Mammary epithelial cell (primary cell): ENCODE measurements at regions of chr5 and their contacts with region 1.

Region 1: DNA sequence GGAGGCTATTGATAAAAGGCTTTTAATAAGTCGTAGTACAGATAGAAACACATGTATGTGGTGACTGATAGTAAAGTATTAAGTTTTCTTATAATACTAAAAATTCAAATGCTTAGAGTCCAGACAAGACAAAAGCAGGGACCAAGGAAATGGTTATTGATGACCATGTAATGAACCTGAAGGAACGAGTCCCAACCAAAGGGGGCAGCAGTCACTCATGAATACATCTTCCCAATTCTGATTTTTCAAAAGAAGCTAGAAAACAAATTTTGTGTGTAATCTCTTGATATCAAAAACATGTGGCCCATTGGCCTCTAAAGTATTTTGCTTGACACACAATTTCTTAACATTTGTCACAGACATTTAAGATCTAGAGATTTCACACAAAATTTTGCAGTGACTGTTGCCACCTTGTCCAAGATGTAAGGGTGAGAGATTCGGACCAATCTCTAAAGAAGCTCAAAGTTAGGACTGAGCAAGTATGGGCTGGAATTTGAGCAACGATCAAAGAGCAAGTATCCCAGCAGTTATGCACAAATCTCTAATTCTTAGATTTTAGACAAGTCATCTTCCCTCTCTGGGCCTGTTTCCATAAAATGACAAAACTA is 66.8 kb downstream of the ARL15 start:
- DNase-seq: peak; percentile 20
- H3K4me3 ChIP-seq: no peak overlapping the region
- H3K27ac ChIP-seq: no peak overlapping the region
- H3K4me1 ChIP-seq: no peaks in the 10 kb centered on the region
- H3K27me3 ChIP-seq: no peaks in the 10 kb centered on the region
- CTCF ChIP-seq: peak; percentile 72 to 81

Region 2: GRCh38 chr5:54135042-54135441 is 108.5 kb before region 1 on chr5:
- CTCF ChIA-PET with region 1: no interaction called
- dilution Hi-C with region 1: no loop called
- in situ Hi-C with region 1: no loop called
- intact Hi-C with region 1: no loop called
- DNase-seq: peak; percentile 37
- H3K4me3 ChIP-seq: no peak overlapping the region
- H3K27ac ChIP-seq: no peak overlapping the region
- H3K4me1 ChIP-seq: peaks cover 5% of the 10 kb centered on the region
- H3K27me3 ChIP-seq: no peaks in the 10 kb centered on the region
- CTCF ChIP-seq: peak in 1 of 2 donors; percentile 5

Region 3: GRCh38 chr5:54383225-54383901 is 139.8 kb after region 1 on chr5:
- CTCF ChIA-PET with region 1: no interaction called
- dilution Hi-C with region 1: no loop called
- in situ Hi-C with region 1: no loop called
- intact Hi-C with region 1: loop called (anchors 1 kb)
- DNase-seq: peak; percentile 39
- H3K4me3 ChIP-seq: no peak overlapping the region
- H3K27ac ChIP-seq: no peak overlapping the region
- H3K4me1 ChIP-seq: peaks cover 16% of the 10 kb centered on the region
- H3K27me3 ChIP-seq: no peaks in the 10 kb centered on the region
- CTCF ChIP-seq: no peak

Region 4: GRCh38 chr5:54415896-54416601 is 172.5 kb after region 1 on chr5:
- CTCF ChIA-PET with region 1: interaction called, 6 read pairs
- dilution Hi-C with region 1: no loop called
- in situ Hi-C with region 1: loop called in 1 of 2 experiments (anchors 10 kb)
- intact Hi-C with region 1: loop called (anchors 1 kb)
- DNase-seq: peak; percentile 83
- H3K4me3 ChIP-seq: no peak overlapping the region
- H3K27ac ChIP-seq: no peak overlapping the region
- H3K4me1 ChIP-seq: peaks cover 18% of the 10 kb centered on the region
- H3K27me3 ChIP-seq: no peaks in the 10 kb centered on the region
- CTCF ChIP-seq: no peak

Region 5: GRCh38 chr5:54492178-54492577 is 248.6 kb after region 1 on chr5:
- CTCF ChIA-PET with region 1: interaction called, 8 read pairs
- dilution Hi-C with region 1: no loop called
- in situ Hi-C with region 1: no loop called
- intact Hi-C with region 1: loop called (anchors 1 kb)
- DNase-seq: peak; percentile 3
- H3K4me3 ChIP-seq: no peak overlapping the region
- H3K27ac ChIP-seq: no peak overlapping the region
- H3K4me1 ChIP-seq: no peaks in the 10 kb centered on the region
- H3K27me3 ChIP-seq: peaks cover 3% of the 10 kb centered on the region
- CTCF ChIP-seq: no peak

Region 6: DNA sequence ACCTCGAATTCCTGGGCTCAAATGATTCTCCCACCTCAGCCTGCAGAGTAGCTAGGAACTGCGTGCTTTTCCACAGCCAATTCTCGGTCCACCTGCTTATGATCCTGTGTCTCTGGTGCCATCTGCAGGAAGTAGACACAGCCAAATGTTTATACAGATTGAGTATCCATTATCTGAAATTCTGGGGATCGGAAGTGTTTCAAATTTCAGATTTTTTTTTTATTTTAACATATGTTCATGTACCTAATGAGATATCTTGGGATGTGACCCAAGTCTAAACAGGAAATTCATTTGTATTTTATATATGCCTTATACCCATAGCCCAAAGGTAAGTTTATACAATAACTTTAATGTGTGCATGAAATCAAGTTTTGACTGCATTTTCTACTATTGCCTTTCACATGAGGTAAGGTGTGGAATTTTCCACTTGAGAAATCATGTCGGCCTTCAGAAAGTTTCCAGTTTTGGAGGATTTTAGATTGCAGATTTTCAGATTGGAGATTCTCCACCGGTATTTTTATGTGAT is 652.3 kb after region 1 on chr5:
- CTCF ChIA-PET with region 1: no interaction called
- dilution Hi-C with region 1: no loop called
- in situ Hi-C with region 1: no loop called
- intact Hi-C with region 1: loop called (anchors 10 kb)
- DNase-seq: peak; percentile 42
- H3K4me3 ChIP-seq: no peak overlapping the region
- H3K27ac ChIP-seq: no peak overlapping the region
- H3K4me1 ChIP-seq: no peaks in the 10 kb centered on the region
- H3K27me3 ChIP-seq: peaks cover 4% of the 10 kb centered on the region
- CTCF ChIP-seq: peak; percentile 48 to 71

Region 7: DNA sequence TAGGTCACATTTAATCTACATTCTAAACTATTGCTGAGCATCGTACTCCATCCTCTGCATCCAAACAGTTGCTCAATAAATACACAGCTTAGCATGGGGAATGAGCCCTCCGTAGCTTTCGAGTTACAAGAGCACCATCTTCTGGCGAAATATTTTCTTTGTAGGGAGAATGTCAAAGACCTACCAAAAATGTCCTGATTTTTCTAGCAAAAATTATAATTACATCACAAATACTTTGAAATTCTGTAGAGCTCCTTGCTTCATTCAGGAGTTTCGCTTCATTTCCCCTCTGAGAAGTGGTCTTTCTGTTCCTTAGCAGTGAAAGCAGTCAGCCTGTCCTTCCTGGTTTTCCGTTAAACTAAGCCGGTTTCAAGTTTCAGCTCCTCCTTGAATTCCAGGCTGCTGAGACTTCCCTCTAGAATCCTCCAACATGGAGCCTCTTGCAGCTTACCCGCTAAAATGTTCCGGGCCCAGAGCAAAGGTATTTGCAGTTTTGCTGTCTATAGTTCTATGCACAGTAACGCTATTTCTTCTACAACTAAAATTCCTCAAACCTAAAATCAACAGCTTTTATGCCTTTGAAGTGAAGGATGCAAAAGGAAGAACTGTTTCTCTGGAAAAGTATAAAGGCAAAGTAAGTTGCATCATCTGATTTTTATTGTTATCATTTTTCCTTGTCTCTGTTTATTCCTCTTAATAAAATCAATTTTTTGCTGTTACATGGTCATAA is 916.4 kb after region 1 on chr5 and contains the start of gene GPX8:
- CTCF ChIA-PET with region 1: no interaction called
- dilution Hi-C with region 1: no loop called
- in situ Hi-C with region 1: no loop called
- intact Hi-C with region 1: loop called (anchors 10 kb)
- DNase-seq: peak; percentile 78
- H3K4me3 ChIP-seq: peak within 1 kb of the TSS; percentile 56 to 93 (median 92)
- H3K27ac ChIP-seq: peak within 1 kb of the TSS; percentile 90
- H3K4me1 ChIP-seq: peaks cover 8% of the 10 kb centered on the region
- H3K27me3 ChIP-seq: no peaks in the 10 kb centered on the region
- CTCF ChIP-seq: peak; percentile 49 to 63
- total RNA-seq, gene GPX8: 38.0 to 38.8 TPM